ENCODE measurements at regions of chr1 and their contacts with region 1.

Region 1: GRCh38 chr1:113072757-113073478 is at the start of gene LRIG2:
- DNase-seq: peak; percentile 96 to 99 (median 98)
- ATAC-seq: peak; percentile 96
- H3K4me3 ChIP-seq: peak within 1 kb of the TSS; percentile 84 to 91
- H3K4me3 Mint-ChIP-seq: peak within 1 kb of the TSS; percentile 99
- H3K27ac ChIP-seq: peak within 1 kb of the TSS; percentile 75 to 87
- H3K27ac Mint-ChIP-seq: peak within 1 kb of the TSS; percentile 97
- H3K4me1 ChIP-seq: peaks cover 27% of the 10 kb centered on the region
- H3K4me1 Mint-ChIP-seq: peaks cover 34% of the 10 kb centered on the region
- H3K27me3 ChIP-seq: no peaks in the 10 kb centered on the region
- H3K27me3 Mint-ChIP-seq: no peaks in the 10 kb centered on the region
- CTCF ChIP-seq: peak; percentile 93
- total RNA-seq, gene LRIG2: 13.1 to 13.8 TPM

Region 2: GRCh38 chr1:112619520-112620376 is 453.2 kb before region 1 on chr1 and contains the start of gene CAPZA1:
- CTCF ChIA-PET with region 1: no interaction called
- POLR2A ChIA-PET with region 1: no interaction called
- intact Hi-C with region 1: loop called in 1 of 2 experiments (anchors 2 kb)
- DNase-seq: peak; percentile 83 to 96 (median 89)
- ATAC-seq: peak; percentile 65
- H3K4me3 ChIP-seq: peak within 1 kb of the TSS; percentile 85 to 88
- H3K4me3 Mint-ChIP-seq: peak within 1 kb of the TSS; percentile 98
- H3K27ac ChIP-seq: peak within 1 kb of the TSS; percentile 98 to 100
- H3K27ac Mint-ChIP-seq: peak within 1 kb of the TSS; percentile 100
- H3K4me1 ChIP-seq: peaks cover 31% of the 10 kb centered on the region
- H3K4me1 Mint-ChIP-seq: peaks cover 44% of the 10 kb centered on the region
- H3K27me3 ChIP-seq: no peaks in the 10 kb centered on the region
- H3K27me3 Mint-ChIP-seq: no peaks in the 10 kb centered on the region
- CTCF ChIP-seq: no peak
- total RNA-seq, gene CAPZA1: 185 to 196 TPM

Region 3: DNA sequence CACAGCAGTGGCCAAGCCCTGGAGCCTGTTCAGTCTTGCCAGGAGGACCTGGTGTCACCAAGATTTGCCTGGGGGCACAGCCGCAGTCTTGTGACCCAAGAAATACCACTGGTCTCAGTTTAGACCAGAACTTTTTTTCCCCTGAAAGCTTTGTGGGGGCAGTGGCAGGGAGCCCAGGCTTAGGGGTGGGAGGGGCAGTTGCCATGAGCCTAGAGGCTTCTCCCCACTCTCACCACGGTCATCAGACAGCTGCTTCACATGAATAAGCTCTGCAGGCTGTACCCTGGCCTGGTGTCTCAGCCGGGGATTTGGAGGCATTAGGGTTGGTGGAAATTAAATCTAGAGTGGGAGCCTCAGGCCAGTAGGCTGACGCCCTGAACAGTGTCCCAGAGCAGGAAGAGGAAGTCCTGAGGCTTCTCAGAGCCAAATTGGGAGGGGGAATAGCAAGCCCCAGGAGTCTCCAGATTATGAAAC is 190.6 kb before region 1 on chr1:
- CTCF ChIA-PET with region 1: interaction called, 41 read pairs
- POLR2A ChIA-PET with region 1: no interaction called
- intact Hi-C with region 1: loop called in 1 of 2 experiments (anchors 2 kb)
- DNase-seq: no peak
- ATAC-seq: no peak
- H3K4me3 ChIP-seq: no peak overlapping the region
- H3K4me3 Mint-ChIP-seq: no peak overlapping the region
- H3K27ac ChIP-seq: no peak overlapping the region
- H3K27ac Mint-ChIP-seq: peak overlapping the region; percentile 37
- H3K4me1 ChIP-seq: no peaks in the 10 kb centered on the region
- H3K4me1 Mint-ChIP-seq: no peaks in the 10 kb centered on the region
- H3K27me3 ChIP-seq: no peaks in the 10 kb centered on the region
- H3K27me3 Mint-ChIP-seq: peaks cover 3% of the 10 kb centered on the region
- CTCF ChIP-seq: no peak

Region 4: DNA sequence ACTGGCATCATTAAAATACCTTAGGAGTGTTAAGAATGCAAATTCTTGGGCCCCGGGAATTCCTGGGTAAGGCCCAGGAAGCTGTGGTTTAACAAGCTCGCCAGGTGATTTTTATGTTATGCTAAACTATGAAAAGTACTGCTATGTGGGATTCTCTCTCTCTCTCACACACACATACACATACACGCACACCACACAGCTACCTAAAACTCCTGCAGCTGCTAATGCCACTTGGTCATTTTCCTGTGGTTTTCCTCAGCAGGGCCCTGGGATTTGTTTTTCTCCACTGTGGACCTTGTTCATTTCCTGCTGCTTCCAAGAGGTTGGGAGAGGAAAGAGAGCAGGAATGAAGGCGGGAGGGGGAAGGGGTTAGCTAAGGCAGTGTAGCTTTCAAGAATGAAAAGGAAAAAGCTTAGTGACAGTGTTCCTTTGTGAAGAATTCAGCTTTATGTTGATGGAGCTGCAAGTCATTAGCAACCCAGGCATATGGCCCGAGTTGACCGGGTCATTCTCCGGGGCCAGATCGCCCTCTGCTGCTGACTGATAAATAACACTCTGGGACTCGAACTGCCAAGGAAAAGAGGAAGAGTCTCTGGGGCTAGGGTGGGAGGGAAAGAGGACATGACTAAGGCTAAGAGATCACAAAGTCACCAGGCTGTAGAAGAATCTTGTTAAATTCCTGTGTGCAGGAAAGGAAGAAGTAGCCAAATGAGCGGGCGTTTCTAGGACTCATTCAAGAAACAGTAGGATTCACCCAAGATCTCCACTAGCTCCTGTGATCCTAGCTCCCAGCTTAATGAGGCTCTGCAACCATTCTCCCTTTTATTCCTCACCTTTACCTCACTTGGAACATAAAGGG is 30.4 kb before region 1 on chr1:
- CTCF ChIA-PET with region 1: interaction called, 13 read pairs
- POLR2A ChIA-PET with region 1: no interaction called
- intact Hi-C with region 1: no loop called
- DNase-seq: peak in 3 of 9 experiments; percentile 7 to 41 (median 29)
- ATAC-seq: no peak
- H3K4me3 ChIP-seq: no peak overlapping the region
- H3K4me3 Mint-ChIP-seq: no peak overlapping the region
- H3K27ac ChIP-seq: no peak overlapping the region
- H3K27ac Mint-ChIP-seq: peak overlapping the region; percentile 33
- H3K4me1 ChIP-seq: peaks cover 25% of the 10 kb centered on the region
- H3K4me1 Mint-ChIP-seq: peaks cover 31% of the 10 kb centered on the region
- H3K27me3 ChIP-seq: no peaks in the 10 kb centered on the region
- H3K27me3 Mint-ChIP-seq: no peaks in the 10 kb centered on the region
- CTCF ChIP-seq: no peak

Region 5: GRCh38 chr1:113389953-113390834 is 317.3 kb after region 1 on chr1 and contains the start of gene MAGI3:
- CTCF ChIA-PET with region 1: no interaction called
- POLR2A ChIA-PET with region 1: no interaction called
- intact Hi-C with region 1: loop called (anchors 2 to 10 kb)
- DNase-seq: peak; percentile 70 to 93 (median 88)
- ATAC-seq: peak; percentile 91
- H3K4me3 ChIP-seq: peak within 1 kb of the TSS; percentile 94 to 97
- H3K4me3 Mint-ChIP-seq: peak within 1 kb of the TSS; percentile 95
- H3K27ac ChIP-seq: peak within 1 kb of the TSS; percentile 30 to 47
- H3K27ac Mint-ChIP-seq: peak within 1 kb of the TSS; percentile 84
- H3K4me1 ChIP-seq: peaks cover 13% of the 10 kb centered on the region
- H3K4me1 Mint-ChIP-seq: peaks cover 24% of the 10 kb centered on the region
- H3K27me3 ChIP-seq: peaks cover 0 to 5% of the 10 kb centered on the region in 2 experiments
- H3K27me3 Mint-ChIP-seq: peaks cover 12% of the 10 kb centered on the region
- CTCF ChIP-seq: no peak
- total RNA-seq, gene MAGI3: 1.7 to 3.2 TPM

Region 6: DNA sequence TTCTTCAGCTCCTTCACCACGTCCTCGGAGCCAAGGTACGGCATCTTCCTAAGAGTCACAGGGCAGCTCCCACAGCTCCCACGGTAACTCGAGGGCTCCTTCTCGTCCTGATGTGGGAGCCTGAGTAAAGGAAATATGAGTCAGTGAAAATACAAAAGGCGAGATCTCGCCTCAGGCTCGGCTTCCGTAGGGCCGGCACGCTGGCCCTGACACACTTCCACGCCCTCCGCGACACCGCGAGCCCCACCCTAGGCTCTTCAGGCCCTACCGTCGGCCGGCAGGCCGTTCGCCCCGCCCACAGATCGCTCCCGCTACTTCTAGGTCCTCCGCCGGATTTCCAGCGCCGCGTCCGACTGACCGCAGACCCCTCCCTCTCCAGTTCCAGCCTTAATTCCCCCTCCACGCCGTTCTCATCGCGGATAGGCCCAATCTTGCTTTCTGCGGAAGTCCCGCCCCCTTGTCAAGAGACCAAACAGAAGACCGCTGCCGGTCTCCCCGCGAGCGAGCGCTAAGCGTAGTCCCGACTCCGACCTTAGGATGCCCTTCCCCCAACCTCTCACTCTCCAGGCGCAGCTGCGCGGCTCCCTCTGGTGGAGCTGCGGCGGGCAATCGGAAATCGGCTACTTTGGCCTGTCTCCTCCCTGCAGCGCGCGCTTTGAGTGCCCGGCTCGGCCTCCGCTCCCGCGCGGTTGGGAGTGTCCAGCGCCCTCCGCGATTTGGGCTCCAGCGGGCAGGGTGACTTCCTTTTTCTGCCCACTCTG is 831.9 kb after region 1 on chr1 and contains the starts of genes AP4B1 and DCLRE1B:
- CTCF ChIA-PET with region 1: no interaction called
- POLR2A ChIA-PET with region 1: no interaction called
- intact Hi-C with region 1: loop called in 1 of 2 experiments (anchors 10 kb)
- DNase-seq: peak; percentile 93 to 100 (median 95)
- ATAC-seq: peak; percentile 92
- H3K4me3 ChIP-seq: peak within 1 kb of the TSS; percentile 83 to 85
- H3K4me3 Mint-ChIP-seq: peak within 1 kb of the TSS; percentile 99
- H3K27ac ChIP-seq: peak within 1 kb of the TSS; percentile 92 to 96
- H3K27ac Mint-ChIP-seq: peak within 1 kb of the TSS; percentile 100
- H3K4me1 ChIP-seq: peaks cover 34% of the 10 kb centered on the region
- H3K4me1 Mint-ChIP-seq: peaks cover 62% of the 10 kb centered on the region
- H3K27me3 ChIP-seq: no peaks in the 10 kb centered on the region
- H3K27me3 Mint-ChIP-seq: no peaks in the 10 kb centered on the region
- CTCF ChIP-seq: peak; percentile 65
- total RNA-seq, gene AP4B1: 63.7 to 67.3 TPM
- total RNA-seq, gene DCLRE1B: 8.1 to 9.1 TPM

Measured in CD8-positive, alpha-beta T cell (primary cell).